Activated B cell treated with CpG ODN at 0.5 μM for 24 hours (primary cell): ENCODE measurements at regions of chr7 and their contacts with region 1.

Region 1: GRCh38 chr7:121278120-121279021 is 50.4 kb upstream of the WNT16 start:
- DNase-seq: no peak
- ATAC-seq: peak; percentile 85
- H3K4me3 Mint-ChIP-seq: no peak overlapping the region
- H3K27ac Mint-ChIP-seq: peak overlapping the region; percentile 68
- H3K4me1 Mint-ChIP-seq: peaks cover 50% of the 10 kb centered on the region
- H3K27me3 Mint-ChIP-seq: no peaks in the 10 kb centered on the region
- CTCF ChIP-seq: no peak

Region 2: DNA sequence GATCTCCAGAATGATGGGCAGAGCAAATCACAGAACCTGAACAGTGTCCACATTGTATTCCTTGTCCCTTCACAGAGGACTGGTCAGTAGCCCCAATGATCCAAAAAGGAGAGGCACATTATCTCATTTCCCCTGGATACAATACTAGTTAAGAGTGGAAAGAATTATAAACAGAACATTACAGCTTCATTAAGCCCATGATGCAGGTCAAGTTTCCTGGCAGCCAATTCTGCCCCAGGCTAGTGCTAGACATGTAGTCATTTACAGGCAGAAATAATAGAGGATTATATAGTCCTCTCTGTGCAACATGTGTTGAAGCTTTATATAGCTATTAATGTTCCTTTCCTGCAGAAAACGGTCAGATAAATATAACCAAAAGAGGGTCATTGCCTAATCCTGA is 73.8 kb before region 1 on chr7:
- CTCF ChIA-PET with region 1: no interaction called
- POLR2A ChIA-PET with region 1: no interaction called
- intact Hi-C with region 1: loop called (anchors 5 kb)
- DNase-seq: no peak
- ATAC-seq: no peak
- H3K4me3 Mint-ChIP-seq: no peak overlapping the region
- H3K27ac Mint-ChIP-seq: no peak overlapping the region
- H3K4me1 Mint-ChIP-seq: peaks cover 42% of the 10 kb centered on the region
- H3K27me3 Mint-ChIP-seq: no peaks in the 10 kb centered on the region
- CTCF ChIP-seq: no peak

Region 3: DNA sequence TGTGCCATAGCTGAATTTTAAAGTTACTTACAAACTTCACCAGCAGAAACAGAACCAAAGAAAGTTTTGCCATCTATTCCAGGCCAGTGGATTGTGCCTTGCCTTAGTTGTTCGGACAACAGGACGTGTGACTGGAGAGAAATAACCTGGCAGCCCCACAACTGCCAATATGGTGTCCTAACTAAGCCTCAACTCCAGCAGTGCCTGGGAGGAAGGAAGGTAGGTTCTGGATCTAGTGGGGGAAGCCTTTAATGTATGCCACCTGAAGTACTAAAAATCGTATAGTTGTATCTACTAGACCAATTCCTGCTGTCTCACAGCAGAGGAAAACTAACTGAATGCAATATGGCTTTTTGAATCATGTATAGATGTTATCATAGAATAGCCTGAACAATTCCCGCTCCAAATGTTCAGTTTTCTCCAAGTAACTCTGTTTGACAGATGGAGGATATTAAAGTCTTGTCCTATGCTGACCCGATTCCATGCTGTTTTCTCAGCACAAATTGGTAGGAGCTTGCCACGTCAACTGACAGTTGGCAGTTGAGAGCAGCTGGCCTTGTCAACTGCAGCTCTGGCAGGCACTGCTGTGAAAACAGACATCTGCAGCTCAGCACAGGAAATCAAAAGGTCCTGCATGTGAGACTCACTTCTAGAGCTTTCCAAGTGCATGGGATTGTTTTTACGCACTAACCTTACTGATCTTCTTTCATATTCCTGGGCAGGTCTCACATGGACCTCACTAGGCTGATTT is 34.1 kb before region 1 on chr7:
- CTCF ChIA-PET with region 1: interaction called, 3 read pairs
- POLR2A ChIA-PET with region 1: no interaction called
- intact Hi-C with region 1: loop called (anchors 5 kb)
- DNase-seq: no peak
- ATAC-seq: no peak
- H3K4me3 Mint-ChIP-seq: no peak overlapping the region
- H3K27ac Mint-ChIP-seq: peak overlapping the region; percentile 18
- H3K4me1 Mint-ChIP-seq: peaks cover 20% of the 10 kb centered on the region
- H3K27me3 Mint-ChIP-seq: no peaks in the 10 kb centered on the region
- CTCF ChIP-seq: no peak

Region 4: GRCh38 chr7:121259826-121260225 is 18.5 kb before region 1 on chr7:
- CTCF ChIA-PET with region 1: no interaction called
- POLR2A ChIA-PET with region 1: interaction called, 3 read pairs
- intact Hi-C with region 1: loop called (anchors 2 kb)
- DNase-seq: no peak
- ATAC-seq: no peak
- H3K4me3 Mint-ChIP-seq: no peak overlapping the region
- H3K27ac Mint-ChIP-seq: no peak overlapping the region
- H3K4me1 Mint-ChIP-seq: peaks cover 28% of the 10 kb centered on the region
- H3K27me3 Mint-ChIP-seq: no peaks in the 10 kb centered on the region
- CTCF ChIP-seq: no peak

Region 5: GRCh38 chr7:121302214-121302745 is 23.9 kb after region 1 on chr7:
- CTCF ChIA-PET with region 1: no interaction called
- POLR2A ChIA-PET with region 1: no interaction called
- intact Hi-C with region 1: loop called (anchors 2 kb)
- DNase-seq: no peak
- ATAC-seq: peak; percentile 97
- H3K4me3 Mint-ChIP-seq: peak overlapping the region; percentile 5
- H3K27ac Mint-ChIP-seq: peak overlapping the region; percentile 81
- H3K4me1 Mint-ChIP-seq: peaks cover 56% of the 10 kb centered on the region
- H3K27me3 Mint-ChIP-seq: no peaks in the 10 kb centered on the region
- CTCF ChIP-seq: no peak

Region 6: GRCh38 chr7:121313793-121314676 is 35.7 kb after region 1 on chr7:
- CTCF ChIA-PET with region 1: no interaction called
- POLR2A ChIA-PET with region 1: no interaction called
- intact Hi-C with region 1: loop called (anchors 2 kb)
- DNase-seq: no peak
- ATAC-seq: peak; percentile 77
- H3K4me3 Mint-ChIP-seq: peak overlapping the region; percentile 44
- H3K27ac Mint-ChIP-seq: peak overlapping the region; percentile 84
- H3K4me1 Mint-ChIP-seq: peaks cover 44% of the 10 kb centered on the region
- H3K27me3 Mint-ChIP-seq: no peaks in the 10 kb centered on the region
- CTCF ChIP-seq: no peak

Region 7: GRCh38 chr7:121329191-121330052 is 51.1 kb after region 1 on chr7:
- CTCF ChIA-PET with region 1: interaction called, 3 read pairs
- POLR2A ChIA-PET with region 1: interaction called, 5 read pairs
- intact Hi-C with region 1: loop called (anchors 2 kb)
- DNase-seq: peak; percentile 43
- ATAC-seq: peak; percentile 49
- H3K4me3 Mint-ChIP-seq: peak overlapping the region; percentile 91
- H3K27ac Mint-ChIP-seq: peak overlapping the region; percentile 85
- H3K4me1 Mint-ChIP-seq: peaks cover 36% of the 10 kb centered on the region
- H3K27me3 Mint-ChIP-seq: peaks cover 11% of the 10 kb centered on the region
- CTCF ChIP-seq: no peak